Naive thymus-derived CD4-positive, alpha-beta T cell (primary cell): ENCODE measurements at regions of chr16 and their contacts with region 1.

Region 1: DNA sequence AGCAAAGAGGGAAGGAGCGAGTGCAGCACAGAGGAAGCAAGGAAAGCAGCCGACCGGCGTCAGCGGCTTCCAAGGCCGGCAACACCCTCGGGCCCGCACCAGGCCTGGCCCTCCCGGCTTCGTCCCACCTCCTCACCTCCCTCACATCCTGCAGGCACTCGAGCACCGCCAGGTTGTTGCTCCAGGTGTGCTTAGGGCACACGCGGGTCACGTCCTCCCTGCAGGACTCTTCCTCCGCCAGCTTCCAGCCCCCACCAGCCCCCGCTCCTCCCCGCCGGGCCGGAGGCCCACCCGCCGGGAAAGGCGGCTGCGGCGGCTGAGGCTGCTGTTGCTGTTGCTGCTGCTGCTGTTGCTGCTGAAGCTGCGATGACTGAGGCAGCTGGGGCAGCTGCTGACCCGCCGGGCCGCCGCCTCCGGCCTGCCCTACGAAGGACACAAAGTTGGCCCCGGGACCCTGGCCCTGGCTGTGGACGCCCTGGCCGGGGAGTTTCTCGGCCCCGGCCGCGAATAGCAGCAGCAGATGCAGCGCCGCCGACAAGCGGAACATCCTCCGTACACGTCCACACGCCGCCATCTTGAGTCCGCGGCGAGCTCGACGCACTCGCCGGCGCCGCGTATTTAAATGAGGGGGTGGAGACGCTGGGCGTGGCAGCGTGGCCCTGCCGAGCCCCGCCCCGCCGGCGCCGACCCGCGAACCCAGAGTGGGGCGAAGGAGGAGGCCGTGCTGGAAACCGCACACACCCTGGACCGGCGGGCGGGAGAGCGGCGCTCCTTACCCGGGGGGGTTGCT is at the start of gene GLG1:
- DNase-seq: peak; percentile 86 to 94 (median 92)
- ATAC-seq: peak; percentile 97
- H3K4me3 ChIP-seq: peak within 1 kb of the TSS; percentile 78
- H3K4me3 Mint-ChIP-seq: peak within 1 kb of the TSS; percentile 92 to 100 (median 98)
- H3K27ac ChIP-seq: peak within 1 kb of the TSS; percentile 91
- H3K27ac Mint-ChIP-seq: peak within 1 kb of the TSS; percentile 86 to 99 (median 96)
- H3K4me1 ChIP-seq: peaks cover 36 to 46% of the 10 kb centered on the region in 2 donors
- H3K4me1 Mint-ChIP-seq: peaks cover 48 to 74% (median 62%) of the 10 kb centered on the region in 7 donors
- H3K27me3 ChIP-seq: no peaks in the 10 kb centered on the region
- H3K27me3 Mint-ChIP-seq: no peaks in the 10 kb centered on the region
- total RNA-seq, gene GLG1: 125 to 198 (median 188) TPM

Region 2: GRCh38 chr16:74296432-74297144 is 310.1 kb before region 1 on chr16 and contains the start of gene PSMD7:
- CTCF ChIA-PET with region 1: no interaction called
- POLR2A ChIA-PET with region 1: interaction called, 3 read pairs
- intact Hi-C with region 1: loop called (anchors 1 to 5 kb)
- DNase-seq: peak; percentile 82 to 93 (median 90)
- ATAC-seq: peak; percentile 96
- H3K4me3 ChIP-seq: peak within 1 kb of the TSS; percentile 86
- H3K4me3 Mint-ChIP-seq: peak within 1 kb of the TSS; percentile 89 to 99 (median 96)
- H3K27ac ChIP-seq: peak within 1 kb of the TSS; percentile 96
- H3K27ac Mint-ChIP-seq: peak within 1 kb of the TSS; percentile 93 to 100 (median 98)
- H3K4me1 ChIP-seq: peaks cover 22 to 25% of the 10 kb centered on the region in 2 donors
- H3K4me1 Mint-ChIP-seq: peaks cover 21 to 52% (median 38%) of the 10 kb centered on the region in 7 donors
- H3K27me3 ChIP-seq: no peaks in the 10 kb centered on the region
- H3K27me3 Mint-ChIP-seq: no peaks in the 10 kb centered on the region
- total RNA-seq, gene PSMD7: 61.1 to 107 (median 71.3) TPM

Region 3: DNA sequence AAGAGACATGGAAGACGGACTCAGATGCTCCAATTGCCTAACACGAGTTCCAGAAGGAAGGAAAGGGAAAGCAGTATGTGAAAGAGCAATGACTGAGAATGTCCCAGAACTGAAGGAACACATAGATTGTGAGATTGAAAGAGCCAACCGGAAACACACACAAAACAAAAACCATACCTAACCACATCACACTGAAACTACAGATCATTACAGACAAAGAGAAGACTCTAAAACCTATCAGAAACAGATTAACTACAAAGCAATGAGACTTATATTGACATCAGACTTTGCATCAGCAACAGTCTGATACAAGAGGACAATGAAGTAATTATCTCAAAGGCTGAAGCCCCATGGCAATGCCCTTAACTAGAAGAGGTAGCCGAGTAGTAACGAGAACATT is 139.8 kb before region 1 on chr16:
- CTCF ChIA-PET with region 1: no interaction called
- POLR2A ChIA-PET with region 1: no interaction called
- intact Hi-C with region 1: loop called in 1 of 2 experiments (anchors 10 kb)
- DNase-seq: peak in 2 of 9 donors; percentile 5 to 9
- ATAC-seq: peak; percentile 63
- H3K4me3 ChIP-seq: no peak overlapping the region
- H3K4me3 Mint-ChIP-seq: peak overlapping the region in 2 of 10 donors; percentile 9 to 26
- H3K27ac ChIP-seq: no peak overlapping the region
- H3K27ac Mint-ChIP-seq: peak overlapping the region; percentile 15 to 84 (median 61)
- H3K4me1 ChIP-seq: peaks cover 4 to 5% of the 10 kb centered on the region in 2 donors
- H3K4me1 Mint-ChIP-seq: peaks cover 10 to 20% (median 16%) of the 10 kb centered on the region in 7 donors
- H3K27me3 ChIP-seq: no peaks in the 10 kb centered on the region
- H3K27me3 Mint-ChIP-seq: no peaks in the 10 kb centered on the region

Region 4: GRCh38 chr16:74521691-74522090 is 85.0 kb before region 1 on chr16:
- CTCF ChIA-PET with region 1: no interaction called
- POLR2A ChIA-PET with region 1: no interaction called
- intact Hi-C with region 1: no loop called
- DNase-seq: no peak
- ATAC-seq: no peak
- H3K4me3 ChIP-seq: no peak overlapping the region
- H3K4me3 Mint-ChIP-seq: no peak overlapping the region
- H3K27ac ChIP-seq: no peak overlapping the region
- H3K27ac Mint-ChIP-seq: peak overlapping the region in 6 of 9 donors; percentile 2 to 87 (median 10)
- H3K4me1 ChIP-seq: no peaks in the 10 kb centered on the region
- H3K4me1 Mint-ChIP-seq: peaks cover 0 to 51% (median 27%) of the 10 kb centered on the region in 7 donors
- H3K27me3 ChIP-seq: no peaks in the 10 kb centered on the region
- H3K27me3 Mint-ChIP-seq: no peaks in the 10 kb centered on the region

Region 5: DNA sequence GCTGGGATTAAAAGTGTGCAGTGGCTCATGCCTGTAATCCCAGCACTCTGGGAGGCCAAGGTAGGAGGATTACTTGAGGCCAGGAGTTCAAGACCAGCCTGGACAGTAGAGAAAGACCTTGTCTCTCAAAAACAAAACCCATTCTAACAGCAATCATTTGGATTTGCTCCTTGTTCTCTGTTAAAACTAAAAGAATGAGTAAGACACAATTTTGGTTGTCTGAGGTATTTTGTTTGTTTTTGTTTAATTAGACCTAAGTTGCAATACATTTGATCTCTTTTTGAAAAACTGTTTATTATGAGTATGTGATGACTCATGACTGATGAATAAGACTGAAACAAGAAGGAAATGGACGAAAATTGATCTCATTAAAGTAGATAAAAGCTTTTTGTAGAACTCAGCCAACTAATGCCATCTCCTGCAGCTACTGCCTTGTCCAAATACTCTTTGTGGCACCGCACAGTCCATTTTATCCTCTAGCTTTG is 28.8 kb before region 1 on chr16:
- CTCF ChIA-PET with region 1: interaction called, 3 read pairs
- POLR2A ChIA-PET with region 1: interaction called, 13 read pairs
- intact Hi-C with region 1: no loop called
- DNase-seq: no peak
- ATAC-seq: no peak
- H3K4me3 ChIP-seq: no peak overlapping the region
- H3K4me3 Mint-ChIP-seq: peak overlapping the region in 6 of 10 donors; percentile 6 to 58 (median 40)
- H3K27ac ChIP-seq: no peak overlapping the region
- H3K27ac Mint-ChIP-seq: peak overlapping the region; percentile 16 to 90 (median 71)
- H3K4me1 ChIP-seq: peaks cover 0 to 10% of the 10 kb centered on the region in 2 donors
- H3K4me1 Mint-ChIP-seq: peaks cover 55 to 93% (median 71%) of the 10 kb centered on the region in 7 donors
- H3K27me3 ChIP-seq: no peaks in the 10 kb centered on the region
- H3K27me3 Mint-ChIP-seq: no peaks in the 10 kb centered on the region

Region 6: DNA sequence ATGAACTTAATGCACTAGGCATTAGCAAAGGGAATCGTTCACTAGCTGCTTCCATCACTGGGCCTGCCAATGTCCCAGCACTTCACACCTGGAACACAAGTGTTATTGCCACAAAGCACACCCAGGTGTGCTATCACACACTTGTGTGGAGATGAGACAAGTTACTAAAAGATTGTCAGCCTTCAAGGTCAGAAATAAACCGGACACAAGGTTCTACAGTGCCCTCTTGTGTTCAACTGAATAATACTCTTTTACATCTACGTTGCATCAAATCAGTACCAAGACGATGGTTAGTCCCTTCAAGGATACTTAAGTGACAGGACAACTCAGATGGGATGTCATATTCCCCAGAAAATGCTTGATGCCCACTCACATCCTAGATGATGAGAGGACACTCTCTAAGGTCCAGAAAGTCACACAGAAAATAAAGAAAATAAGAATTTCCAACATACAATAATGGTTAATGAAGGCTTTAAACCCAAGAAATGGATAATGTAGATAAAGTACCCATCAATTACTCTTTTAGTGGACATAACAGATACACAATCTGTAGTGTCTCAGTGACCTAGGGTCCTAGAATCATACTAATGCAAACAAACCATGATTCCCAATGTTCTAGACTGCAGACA is 16.6 kb after region 1 on chr16:
- CTCF ChIA-PET with region 1: interaction called, 4 read pairs
- POLR2A ChIA-PET with region 1: interaction called, 6 read pairs
- intact Hi-C with region 1: loop called in 1 of 2 experiments (anchors 1 kb)
- DNase-seq: peak in 6 of 9 donors; percentile 29 to 59 (median 53)
- ATAC-seq: peak; percentile 78
- H3K4me3 ChIP-seq: no peak overlapping the region
- H3K4me3 Mint-ChIP-seq: no peak overlapping the region
- H3K27ac ChIP-seq: no peak overlapping the region
- H3K27ac Mint-ChIP-seq: peak overlapping the region in 5 of 9 donors; percentile 20 to 78 (median 49)
- H3K4me1 ChIP-seq: no peaks in the 10 kb centered on the region
- H3K4me1 Mint-ChIP-seq: peaks cover 5 to 18% (median 9%) of the 10 kb centered on the region in 7 donors
- H3K27me3 ChIP-seq: no peaks in the 10 kb centered on the region
- H3K27me3 Mint-ChIP-seq: no peaks in the 10 kb centered on the region

Region 7: GRCh38 chr16:74691093-74691855 is 84.6 kb after region 1 on chr16:
- CTCF ChIA-PET with region 1: no interaction called
- POLR2A ChIA-PET with region 1: no interaction called
- intact Hi-C with region 1: no loop called
- DNase-seq: no peak
- ATAC-seq: no peak
- H3K4me3 ChIP-seq: no peak overlapping the region
- H3K4me3 Mint-ChIP-seq: no peak overlapping the region
- H3K27ac ChIP-seq: no peak overlapping the region
- H3K27ac Mint-ChIP-seq: no peak overlapping the region
- H3K4me1 ChIP-seq: peaks cover 0 to 3% of the 10 kb centered on the region in 2 donors
- H3K4me1 Mint-ChIP-seq: peaks cover 8 to 34% (median 25%) of the 10 kb centered on the region in 7 donors
- H3K27me3 ChIP-seq: no peaks in the 10 kb centered on the region
- H3K27me3 Mint-ChIP-seq: no peaks in the 10 kb centered on the region

Region 8: GRCh38 chr16:74817845-74818244 is 211.1 kb after region 1 on chr16:
- CTCF ChIA-PET with region 1: no interaction called
- POLR2A ChIA-PET with region 1: no interaction called
- intact Hi-C with region 1: no loop called
- DNase-seq: no peak
- ATAC-seq: no peak
- H3K4me3 ChIP-seq: no peak overlapping the region
- H3K4me3 Mint-ChIP-seq: no peak overlapping the region
- H3K27ac ChIP-seq: no peak overlapping the region
- H3K27ac Mint-ChIP-seq: no peak overlapping the region
- H3K4me1 ChIP-seq: no peaks in the 10 kb centered on the region
- H3K4me1 Mint-ChIP-seq: peaks cover 0 to 5% (median 0%) of the 10 kb centered on the region in 7 donors
- H3K27me3 ChIP-seq: no peaks in the 10 kb centered on the region
- H3K27me3 Mint-ChIP-seq: peaks cover 0 to 31% (median 0%) of the 10 kb centered on the region in 5 donors

Region 9: GRCh38 chr16:74984535-74985296 is 378.0 kb after region 1 on chr16 and contains the start of gene WDR59:
- CTCF ChIA-PET with region 1: no interaction called
- POLR2A ChIA-PET with region 1: no interaction called
- intact Hi-C with region 1: loop called (anchors 2 kb)
- DNase-seq: peak; percentile 87 to 99 (median 98)
- ATAC-seq: peak; percentile 100
- H3K4me3 ChIP-seq: peak within 1 kb of the TSS; percentile 98
- H3K4me3 Mint-ChIP-seq: peak within 1 kb of the TSS; percentile 90 to 98 (median 95)
- H3K27ac ChIP-seq: peak within 1 kb of the TSS; percentile 86
- H3K27ac Mint-ChIP-seq: peak within 1 kb of the TSS; percentile 72 to 96 (median 92)
- H3K4me1 ChIP-seq: peaks cover 5 to 6% of the 10 kb centered on the region in 2 donors
- H3K4me1 Mint-ChIP-seq: peaks cover 0 to 27% (median 23%) of the 10 kb centered on the region in 7 donors
- H3K27me3 ChIP-seq: no peaks in the 10 kb centered on the region
- H3K27me3 Mint-ChIP-seq: no peaks in the 10 kb centered on the region
- total RNA-seq, gene WDR59: 82.7 to 130 (median 84.7) TPM

Region 10: DNA sequence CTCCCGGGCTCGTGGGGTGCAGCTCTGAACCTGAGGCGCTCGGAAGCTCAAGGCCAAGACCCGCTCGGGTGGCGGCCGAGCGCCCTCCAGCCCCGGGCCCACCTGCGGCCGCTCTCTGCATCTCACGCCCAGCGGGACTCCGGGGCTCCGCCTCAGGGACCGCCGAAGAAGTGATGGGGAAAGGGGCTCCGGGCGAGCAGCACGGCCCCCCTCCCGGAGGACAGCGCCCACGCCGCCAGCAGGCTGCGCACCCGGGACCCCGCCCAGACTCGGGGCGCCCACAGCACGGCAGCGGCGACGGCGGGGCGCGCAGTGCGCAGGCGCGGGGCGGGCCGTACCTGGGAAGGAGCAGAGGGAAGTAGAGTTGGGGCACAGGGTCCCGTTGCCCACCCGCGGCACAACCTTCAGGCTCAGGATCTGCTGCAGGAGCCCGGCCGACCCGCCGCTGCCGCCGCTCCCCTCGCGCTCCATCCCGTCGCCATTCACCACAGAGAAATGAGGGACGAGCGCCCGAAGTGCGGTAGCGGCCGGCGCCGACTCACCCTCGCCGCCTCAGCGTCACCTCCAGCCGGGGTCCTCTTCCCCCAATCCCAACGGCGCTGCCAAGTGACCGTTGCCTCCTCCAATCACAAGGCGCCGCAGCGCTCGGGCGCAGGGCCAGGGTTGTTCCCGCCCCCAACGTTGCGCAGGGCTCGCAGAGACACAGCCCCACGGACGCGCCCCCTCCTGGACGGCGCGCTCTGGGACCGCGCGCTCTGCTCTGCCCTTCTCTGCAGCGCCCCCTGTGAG is 857.6 kb after region 1 on chr16 and contains the start of gene TMEM170A:
- CTCF ChIA-PET with region 1: no interaction called
- POLR2A ChIA-PET with region 1: no interaction called
- intact Hi-C with region 1: loop called (anchors 1 to 10 kb)
- DNase-seq: peak; percentile 96 to 99 (median 99)
- ATAC-seq: peak; percentile 95
- H3K4me3 ChIP-seq: peak within 1 kb of the TSS; percentile 93
- H3K4me3 Mint-ChIP-seq: peak within 1 kb of the TSS; percentile 86 to 98 (median 93)
- H3K27ac ChIP-seq: peak within 1 kb of the TSS; percentile 93
- H3K27ac Mint-ChIP-seq: peak within 1 kb of the TSS; percentile 75 to 97 (median 93)
- H3K4me1 ChIP-seq: peaks cover 26 to 31% of the 10 kb centered on the region in 2 donors
- H3K4me1 Mint-ChIP-seq: peaks cover 31 to 49% (median 44%) of the 10 kb centered on the region in 7 donors
- H3K27me3 ChIP-seq: no peaks in the 10 kb centered on the region
- H3K27me3 Mint-ChIP-seq: peaks cover 0 to 5% (median 0%) of the 10 kb centered on the region in 5 donors
- total RNA-seq, gene TMEM170A: 31.0 to 50.9 (median 46.6) TPM